Activated naive CD4-positive, alpha-beta T cell treated with anti-CD3 and anti-CD28 coated beads for 36 hours (primary cell): ENCODE measurements at regions of chr3 and their contacts with region 1.

Region 1: GRCh38 chr3:111539351-111540331 is 2.4 kb upstream of the CD96 start:
- DNase-seq: peak; percentile 73
- H3K4me3 Mint-ChIP-seq: peak overlapping the region; percentile 53
- H3K27ac Mint-ChIP-seq: peak overlapping the region; percentile 79
- H3K4me1 Mint-ChIP-seq: peaks cover 63% of the 10 kb centered on the region
- H3K27me3 Mint-ChIP-seq: no peaks in the 10 kb centered on the region

Region 2: DNA sequence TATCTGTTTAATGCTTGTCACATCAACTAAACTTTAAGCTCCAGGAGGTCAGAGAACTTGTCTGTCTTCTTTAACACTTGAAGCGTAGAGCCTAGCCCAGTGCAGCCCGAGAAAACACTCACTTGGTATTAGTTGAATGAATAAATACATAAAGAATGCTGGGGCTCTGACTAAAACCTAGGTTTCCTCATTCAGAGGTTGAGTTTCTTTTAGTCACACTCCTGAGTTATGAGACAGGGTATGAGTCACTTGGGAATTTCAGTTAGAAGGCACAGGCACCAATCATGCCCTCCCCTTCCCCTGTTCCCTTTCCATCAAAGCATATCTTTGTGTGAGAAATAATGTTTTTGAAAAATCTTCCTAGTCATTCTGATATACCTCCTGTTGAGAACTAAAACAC is 1612.5 kb before region 1 on chr3:
- CTCF ChIA-PET with region 1: no interaction called
- intact Hi-C with region 1: loop called (anchors 2 kb)
- DNase-seq: peak; percentile 58
- H3K4me3 Mint-ChIP-seq: no peak overlapping the region
- H3K27ac Mint-ChIP-seq: no peak overlapping the region
- H3K4me1 Mint-ChIP-seq: peaks cover 12% of the 10 kb centered on the region
- H3K27me3 Mint-ChIP-seq: peaks cover 2% of the 10 kb centered on the region

Region 3: GRCh38 chr3:111238885-111239284 is 300.8 kb before region 1 on chr3:
- CTCF ChIA-PET with region 1: no interaction called
- intact Hi-C with region 1: loop called (anchors 2 kb)
- DNase-seq: no peak
- H3K4me3 Mint-ChIP-seq: no peak overlapping the region
- H3K27ac Mint-ChIP-seq: no peak overlapping the region
- H3K4me1 Mint-ChIP-seq: peaks cover 17% of the 10 kb centered on the region
- H3K27me3 Mint-ChIP-seq: no peaks in the 10 kb centered on the region

Region 4: GRCh38 chr3:111392901-111393351 is 146.7 kb before region 1 on chr3:
- CTCF ChIA-PET with region 1: interaction called, 4 read pairs
- intact Hi-C with region 1: loop called (anchors 1 kb)
- DNase-seq: peak; percentile 57
- H3K4me3 Mint-ChIP-seq: no peak overlapping the region
- H3K27ac Mint-ChIP-seq: no peak overlapping the region
- H3K4me1 Mint-ChIP-seq: peaks cover 20% of the 10 kb centered on the region
- H3K27me3 Mint-ChIP-seq: no peaks in the 10 kb centered on the region

Region 5: DNA sequence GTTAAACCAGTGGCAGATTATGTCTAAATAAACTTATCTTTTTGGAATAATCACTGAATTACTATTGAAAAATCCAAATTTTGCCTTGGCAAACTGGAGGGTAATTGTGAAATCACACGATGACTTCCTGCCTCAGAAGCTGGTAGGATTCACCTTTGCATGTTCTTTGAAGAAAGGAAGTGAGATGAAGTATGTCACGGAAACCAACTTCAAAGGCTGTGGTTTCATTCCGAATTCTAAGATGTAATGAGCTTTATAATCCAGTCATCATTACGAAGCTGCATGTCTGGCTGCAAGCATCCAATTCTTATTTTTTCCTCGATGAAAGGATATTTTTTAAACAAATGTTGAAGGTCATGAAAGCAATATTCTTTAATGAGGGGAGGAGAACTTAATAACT is 70.5 kb after region 1 on chr3:
- CTCF ChIA-PET with region 1: interaction called, 15 read pairs
- intact Hi-C with region 1: loop called (anchors 1 kb)
- DNase-seq: peak; percentile 71
- H3K4me3 Mint-ChIP-seq: peak overlapping the region; percentile 56
- H3K27ac Mint-ChIP-seq: peak overlapping the region; percentile 97
- H3K4me1 Mint-ChIP-seq: peaks cover 94% of the 10 kb centered on the region
- H3K27me3 Mint-ChIP-seq: no peaks in the 10 kb centered on the region

Region 6: DNA sequence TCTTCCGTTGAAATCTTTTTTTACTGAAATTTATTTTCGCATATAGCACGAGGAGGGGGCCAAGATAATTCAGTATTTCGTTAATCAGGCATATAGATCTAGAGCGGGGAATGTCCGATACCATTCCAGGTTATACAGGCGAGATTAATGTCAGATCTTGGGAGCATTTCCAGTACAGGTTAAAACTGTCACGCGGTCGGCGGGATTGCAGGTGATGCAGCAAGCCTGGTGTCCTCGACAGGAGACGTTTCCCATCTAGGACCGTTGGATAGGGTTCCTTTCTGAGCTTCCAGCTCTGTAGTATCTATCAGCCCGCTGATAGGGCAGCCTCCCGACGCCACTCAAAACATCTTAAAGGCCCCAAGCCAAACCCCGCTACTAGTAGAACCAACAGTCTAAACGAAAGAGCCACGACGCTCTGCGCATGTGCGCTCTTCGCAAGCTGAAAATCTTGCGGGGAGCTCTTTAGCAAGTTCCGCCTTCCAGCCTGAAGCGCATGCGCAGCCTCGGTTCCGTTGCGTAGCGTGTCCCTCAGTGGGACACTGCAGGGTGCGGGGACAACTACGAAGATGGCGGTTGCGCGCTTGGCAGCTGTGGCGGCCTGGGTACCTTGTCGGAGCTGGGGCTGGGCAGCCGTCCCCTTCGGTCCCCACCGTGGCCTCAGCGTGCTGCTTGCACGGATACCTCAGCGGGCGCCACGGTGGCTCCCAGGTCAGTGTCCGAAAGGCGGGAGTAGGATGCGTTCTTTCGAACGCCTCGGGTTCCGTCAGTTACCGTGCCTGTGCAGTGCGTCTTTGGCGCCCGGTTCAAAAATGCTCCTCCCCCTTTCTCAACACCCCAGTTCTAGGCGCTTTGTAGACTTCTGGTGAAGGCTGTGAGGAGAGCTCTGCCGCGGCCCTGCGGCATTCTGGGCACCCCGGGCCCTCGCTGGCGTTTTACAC is 439.1 kb after region 1 on chr3 and contains the start of gene ABHD10:
- CTCF ChIA-PET with region 1: no interaction called
- intact Hi-C with region 1: loop called (anchors 2 kb)
- DNase-seq: peak; percentile 98
- H3K4me3 Mint-ChIP-seq: peak within 1 kb of the TSS; percentile 87
- H3K27ac Mint-ChIP-seq: peak within 1 kb of the TSS; percentile 89
- H3K4me1 Mint-ChIP-seq: peaks cover 38% of the 10 kb centered on the region
- H3K27me3 Mint-ChIP-seq: no peaks in the 10 kb centered on the region
- total RNA-seq, gene ABHD10: 53.1 to 54.6 TPM